ENCODE measurements at regions of chr18 and their contacts with region 1.

Region 1: GRCh38 chr18:49813319-49814146 is at the start of gene ACAA2:
- DNase-seq: peak; percentile 51 to 92
- H3K4me3 ChIP-seq: peak within 1 kb of the TSS; percentile 79
- H3K27ac ChIP-seq: peak within 1 kb of the TSS; percentile 94 to 98
- H3K4me1 ChIP-seq: peaks cover 7 to 10% of the 10 kb centered on the region in 2 donors
- H3K27me3 ChIP-seq: no peaks in the 10 kb centered on the region
- CTCF ChIP-seq: no peak
- total RNA-seq, gene ACAA2: 33.4 TPM

Region 2: GRCh38 chr18:48007955-48008701 is 1805.4 kb before region 1 on chr18:
- intact Hi-C with region 1: loop called (anchors 10 kb)
- DNase-seq: peak in 1 of 2 donors; percentile 72
- H3K4me3 ChIP-seq: peak overlapping the region; percentile 62 to 90
- H3K27ac ChIP-seq: peak overlapping the region; percentile 15 to 27
- H3K4me1 ChIP-seq: peaks cover 4 to 5% of the 10 kb centered on the region in 2 donors
- H3K27me3 ChIP-seq: no peaks in the 10 kb centered on the region
- CTCF ChIP-seq: peak; percentile 9 to 34 (median 23)

Region 3: GRCh38 chr18:49486953-49487710 is 326.4 kb before region 1 on chr18 and contains the start of gene C18orf32:
- intact Hi-C with region 1: loop called (anchors 2 kb)
- DNase-seq: peak; percentile 71 to 97
- H3K4me3 ChIP-seq: peak within 1 kb of the TSS; percentile 58 to 96
- H3K27ac ChIP-seq: peak within 1 kb of the TSS; percentile 93 to 98
- H3K4me1 ChIP-seq: peaks cover 4 to 13% of the 10 kb centered on the region in 2 donors
- H3K27me3 ChIP-seq: no peaks in the 10 kb centered on the region
- CTCF ChIP-seq: no peak
- total RNA-seq, gene C18orf32: 7.8 TPM

Region 4: DNA sequence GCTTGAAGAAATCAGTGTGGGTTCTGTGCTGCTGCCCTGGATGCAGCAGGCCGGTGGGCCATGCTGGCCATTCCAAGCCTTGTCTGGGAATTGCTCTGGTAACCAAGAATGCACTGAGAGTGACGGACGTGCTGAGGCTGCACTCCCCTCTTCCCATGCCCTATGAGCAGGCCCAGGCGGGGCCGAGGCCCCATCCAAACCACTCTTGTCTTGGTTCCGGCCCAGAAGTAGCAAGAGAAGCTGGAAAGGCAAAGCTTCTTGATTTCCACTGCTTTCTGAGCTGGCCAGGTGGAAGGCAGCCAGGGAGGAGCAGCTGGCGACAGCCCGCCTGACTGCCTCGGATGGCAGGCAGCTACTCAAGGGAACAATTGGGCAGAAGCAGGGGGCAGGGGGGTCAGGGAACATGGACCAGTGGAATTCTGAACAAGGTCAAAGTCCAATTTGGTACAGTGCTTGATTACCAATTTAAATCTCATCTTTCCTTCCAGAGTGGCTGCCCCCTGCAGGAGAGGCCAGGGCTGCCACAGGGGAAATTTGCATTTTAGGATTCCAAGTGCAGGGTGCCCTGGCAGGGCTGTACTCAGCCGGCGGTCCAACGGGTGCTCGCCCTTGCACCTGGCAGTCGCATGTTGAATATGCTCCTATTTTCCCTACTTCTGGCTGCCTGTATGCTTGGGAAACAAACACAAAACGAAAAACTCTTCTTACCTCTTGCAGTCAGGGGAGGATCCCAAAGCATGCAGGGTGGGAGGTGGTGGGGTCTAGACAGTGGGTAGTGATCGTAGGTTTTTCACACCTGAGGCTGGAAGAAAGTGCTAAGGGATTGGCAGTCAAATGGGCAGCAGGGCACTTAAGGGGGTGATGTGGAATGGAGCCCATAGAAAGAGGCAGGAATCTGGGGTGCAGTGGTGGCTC is 184.4 kb before region 1 on chr18:
- intact Hi-C with region 1: no loop called
- DNase-seq: no peak
- H3K4me3 ChIP-seq: no peak overlapping the region
- H3K27ac ChIP-seq: no peak overlapping the region
- H3K4me1 ChIP-seq: no peaks in the 10 kb centered on the region
- H3K27me3 ChIP-seq: no peaks in the 10 kb centered on the region
- CTCF ChIP-seq: no peak

Region 5: DNA sequence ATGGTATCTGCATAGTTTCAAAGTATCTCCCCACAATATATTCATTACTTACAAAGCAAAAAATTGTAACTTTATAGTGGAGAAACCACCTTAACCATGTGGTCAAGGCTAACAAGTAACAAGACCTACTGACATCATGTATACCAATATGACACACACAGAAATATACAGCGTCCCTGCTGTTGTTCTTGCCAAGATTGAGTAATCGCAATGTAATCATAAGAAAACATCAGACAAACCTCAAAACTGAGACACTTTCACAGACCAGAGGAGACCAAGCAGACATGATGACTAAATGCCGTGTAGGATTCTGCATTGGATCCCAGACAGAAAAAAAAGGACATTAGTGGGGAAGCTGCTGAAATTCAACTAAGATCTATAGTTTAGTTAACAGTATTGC is 123.2 kb before region 1 on chr18:
- intact Hi-C with region 1: no loop called
- DNase-seq: no peak
- H3K4me3 ChIP-seq: no peak overlapping the region
- H3K27ac ChIP-seq: no peak overlapping the region
- H3K4me1 ChIP-seq: no peaks in the 10 kb centered on the region
- H3K27me3 ChIP-seq: no peaks in the 10 kb centered on the region
- CTCF ChIP-seq: no peak

Region 6: GRCh38 chr18:50266248-50266704 is 452.7 kb after region 1 on chr18 and contains the start of gene CFAP53:
- intact Hi-C with region 1: loop called (anchors 5 kb)
- DNase-seq: peak; percentile 51 to 95
- H3K4me3 ChIP-seq: peak within 1 kb of the TSS; percentile 57 to 87
- H3K27ac ChIP-seq: no peak within 1 kb of the TSS
- H3K4me1 ChIP-seq: no peaks in the 10 kb centered on the region
- H3K27me3 ChIP-seq: no peaks in the 10 kb centered on the region
- CTCF ChIP-seq: no peak
- total RNA-seq, gene CFAP53: not detected

Region 7: GRCh38 chr18:50281295-50281971 is 467.9 kb after region 1 on chr18 and contains the start of gene MBD1:
- intact Hi-C with region 1: loop called (anchors 5 kb)
- DNase-seq: peak; percentile 92 to 98
- H3K4me3 ChIP-seq: peak within 1 kb of the TSS; percentile 71 to 93
- H3K27ac ChIP-seq: peak within 1 kb of the TSS; percentile 92 to 97
- H3K4me1 ChIP-seq: peaks cover 3 to 23% of the 10 kb centered on the region in 2 donors
- H3K27me3 ChIP-seq: no peaks in the 10 kb centered on the region
- CTCF ChIP-seq: peak in 2 of 3 experiments; percentile 22 to 38
- total RNA-seq, gene MBD1: 53.4 TPM

Region 8: GRCh38 chr18:50374753-50375391 is 561.3 kb after region 1 on chr18 and contains the start of gene SKA1:
- intact Hi-C with region 1: loop called (anchors 5 kb)
- DNase-seq: peak; percentile 62 to 93
- H3K4me3 ChIP-seq: peak within 1 kb of the TSS; percentile 50 to 70
- H3K27ac ChIP-seq: peak within 1 kb of the TSS; percentile 14 to 72
- H3K4me1 ChIP-seq: peaks cover 0 to 7% of the 10 kb centered on the region in 2 donors
- H3K27me3 ChIP-seq: no peaks in the 10 kb centered on the region
- CTCF ChIP-seq: no peak
- total RNA-seq, gene SKA1: not detected

Measured in ascending aorta (tissue), 2 donors.